Dendritic cell treated with granulocyte-macrophage colony-stimulating factor and Interleukin-4, amounts not matched to agents 40 ng/mL and 50 ng/mL, for 4 days (primary cell): ENCODE measurements at regions of chr6 and their contacts with region 1.

Region 1: DNA sequence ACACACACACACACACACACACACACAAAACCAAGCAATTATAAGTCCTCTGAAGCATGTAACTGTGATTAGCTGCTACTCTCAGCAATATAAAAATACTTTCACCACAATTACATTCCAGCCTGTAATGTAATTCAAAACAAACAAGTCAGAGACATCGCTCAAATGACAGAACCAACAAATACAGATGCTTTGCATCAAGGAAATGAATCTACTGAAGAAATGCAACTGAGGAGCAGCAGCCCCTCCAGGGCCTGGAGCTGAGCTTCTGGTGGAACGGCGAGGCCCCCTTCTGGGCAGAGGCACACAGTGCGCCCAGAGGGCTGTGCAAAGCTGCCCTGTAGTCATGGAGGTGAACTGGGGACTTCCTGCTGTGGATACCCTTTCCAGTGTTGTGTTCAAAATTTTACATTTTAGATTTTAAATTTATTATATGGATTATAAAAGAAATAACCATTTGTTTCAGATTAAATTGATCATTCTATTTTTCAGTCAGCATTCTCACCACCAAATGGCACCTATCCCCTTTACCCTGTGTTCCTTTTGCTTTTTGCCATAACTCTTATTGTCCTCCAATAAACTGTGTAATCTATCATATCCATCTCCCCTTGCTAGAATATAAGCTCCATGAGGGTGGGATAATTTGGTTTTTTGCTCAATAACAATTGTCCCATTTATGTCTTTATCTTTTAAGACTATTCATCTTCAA is 23.2 kb downstream of the ADAT2 start:
- H3K4me3 Mint-ChIP-seq: no peak overlapping the region
- H3K27ac Mint-ChIP-seq: no peak overlapping the region
- H3K4me1 Mint-ChIP-seq: no peaks in the 10 kb centered on the region
- H3K27me3 Mint-ChIP-seq: no peaks in the 10 kb centered on the region

Region 2: DNA sequence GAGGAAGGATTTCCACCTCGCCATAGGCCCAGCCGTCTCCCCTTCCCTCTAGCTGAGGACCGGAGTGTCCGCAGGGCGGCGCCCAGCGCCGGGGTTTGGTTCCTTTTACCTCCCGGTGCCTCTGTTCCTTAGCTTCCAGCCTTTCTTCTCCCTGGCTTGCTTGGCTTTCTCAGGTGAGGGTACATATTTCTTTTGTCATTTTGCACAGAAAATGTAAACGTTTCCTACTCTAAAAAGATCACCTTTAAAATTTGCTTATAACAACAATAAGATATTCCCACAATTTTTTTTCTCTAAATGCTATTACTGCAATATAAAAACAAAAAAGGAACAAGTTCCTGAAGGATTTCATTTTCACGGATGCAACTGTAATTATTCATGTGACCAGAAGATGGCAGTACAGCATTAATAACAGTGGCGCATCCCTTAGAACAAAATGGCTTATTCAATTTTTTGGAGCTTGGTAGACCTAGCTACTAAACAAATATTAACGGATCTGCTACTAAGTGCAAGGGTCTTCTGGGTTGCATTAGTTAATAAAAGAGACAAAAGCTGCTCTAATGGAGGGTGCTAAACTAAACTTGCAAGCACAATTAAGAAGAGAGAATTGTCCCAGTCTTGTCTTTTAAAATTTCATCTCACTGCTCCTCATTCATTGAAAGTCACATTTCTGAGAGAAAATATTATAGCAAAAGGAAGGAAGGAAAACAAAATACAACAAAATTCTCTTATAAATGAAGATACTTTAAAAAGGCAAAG is 952.6 kb before region 1 on chr6:
- intact Hi-C with region 1: loop called (anchors 5 kb)
- H3K4me3 Mint-ChIP-seq: no peak overlapping the region
- H3K27ac Mint-ChIP-seq: no peak overlapping the region
- H3K4me1 Mint-ChIP-seq: no peaks in the 10 kb centered on the region
- H3K27me3 Mint-ChIP-seq: no peaks in the 10 kb centered on the region

Region 3: DNA sequence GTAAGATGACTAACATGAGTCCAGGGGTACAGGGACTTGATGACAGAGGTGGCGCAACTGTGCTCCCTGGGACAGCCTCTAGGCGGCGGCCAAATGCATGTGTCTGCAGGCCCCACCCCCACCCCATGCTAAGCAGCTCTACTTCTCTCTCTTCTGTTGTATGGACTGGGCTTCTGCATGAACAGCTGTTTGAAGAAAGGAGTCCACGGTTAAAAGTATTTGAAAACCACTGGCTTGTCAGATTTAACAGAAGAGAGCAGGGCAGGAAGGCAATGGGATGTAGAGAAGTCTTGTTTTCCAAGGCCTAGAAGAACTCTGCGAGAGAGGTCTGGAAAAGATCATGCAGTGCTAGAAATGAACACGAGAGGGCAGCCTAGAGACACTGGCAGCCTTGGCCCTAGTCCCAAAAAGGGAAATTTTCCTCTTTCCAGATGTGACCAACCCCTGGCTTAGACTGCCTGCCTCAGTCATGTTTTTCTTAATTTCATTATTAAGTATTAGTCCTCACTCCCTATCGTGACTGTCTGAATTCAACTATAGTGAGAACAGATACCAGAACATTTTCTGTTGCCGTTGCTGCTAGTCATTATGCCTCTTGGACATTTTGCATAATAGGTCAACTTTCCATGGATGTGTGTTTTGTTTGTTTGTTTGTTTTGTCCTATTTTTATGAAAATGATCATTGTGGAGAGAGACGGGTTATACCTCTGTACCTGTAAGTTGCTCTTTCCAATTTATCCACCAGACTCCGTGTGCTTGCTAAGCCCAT is 860.5 kb before region 1 on chr6:
- intact Hi-C with region 1: loop called (anchors 10 kb)
- H3K4me3 Mint-ChIP-seq: no peak overlapping the region
- H3K27ac Mint-ChIP-seq: no peak overlapping the region
- H3K4me1 Mint-ChIP-seq: no peaks in the 10 kb centered on the region
- H3K27me3 Mint-ChIP-seq: no peaks in the 10 kb centered on the region

Region 4: DNA sequence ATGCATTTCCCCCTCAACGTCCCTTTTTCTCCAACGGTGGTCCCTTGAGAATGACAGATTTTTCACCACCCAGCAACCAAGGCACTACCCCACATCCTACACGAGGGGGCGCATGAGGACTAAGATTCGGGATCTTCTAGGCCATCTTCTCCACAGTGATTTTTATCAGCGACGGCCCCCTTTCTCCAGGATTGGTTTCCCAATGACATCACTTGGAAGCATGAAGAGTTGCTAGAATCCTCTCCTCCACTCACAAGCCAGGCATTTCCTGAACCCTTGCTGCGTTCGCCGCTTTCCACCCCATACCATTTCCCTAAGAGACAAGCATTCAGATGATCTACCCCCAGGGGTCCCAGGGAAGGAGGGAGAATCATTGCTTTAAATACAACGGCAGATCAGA is 734.3 kb before region 1 on chr6:
- intact Hi-C with region 1: loop called (anchors 1 kb)
- H3K4me3 Mint-ChIP-seq: no peak overlapping the region
- H3K27ac Mint-ChIP-seq: no peak overlapping the region
- H3K4me1 Mint-ChIP-seq: peaks cover 33% of the 10 kb centered on the region
- H3K27me3 Mint-ChIP-seq: peaks cover 7% of the 10 kb centered on the region

Region 5: DNA sequence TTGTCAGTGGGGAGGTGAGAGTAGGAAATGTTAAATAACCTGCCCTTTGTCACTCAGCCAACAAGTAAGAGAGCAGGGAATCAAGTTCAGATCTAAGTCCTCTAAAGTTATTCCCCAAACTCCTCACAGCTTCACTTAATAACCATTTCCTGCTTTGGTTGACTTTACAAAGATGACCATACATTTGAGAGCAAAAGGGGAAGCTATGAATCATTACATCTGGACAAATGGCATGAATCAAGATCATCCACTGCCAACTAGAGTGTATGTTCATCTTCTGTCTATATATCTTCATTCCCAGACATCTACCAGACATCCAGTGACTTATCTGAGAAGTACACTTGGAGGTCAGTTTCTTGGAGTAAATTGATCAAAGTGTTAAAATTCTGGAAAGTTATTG is 467.2 kb before region 1 on chr6:
- intact Hi-C with region 1: no loop called
- H3K4me3 Mint-ChIP-seq: no peak overlapping the region
- H3K27ac Mint-ChIP-seq: no peak overlapping the region
- H3K4me1 Mint-ChIP-seq: peaks cover 11% of the 10 kb centered on the region
- H3K27me3 Mint-ChIP-seq: peaks cover 3% of the 10 kb centered on the region

Region 6: DNA sequence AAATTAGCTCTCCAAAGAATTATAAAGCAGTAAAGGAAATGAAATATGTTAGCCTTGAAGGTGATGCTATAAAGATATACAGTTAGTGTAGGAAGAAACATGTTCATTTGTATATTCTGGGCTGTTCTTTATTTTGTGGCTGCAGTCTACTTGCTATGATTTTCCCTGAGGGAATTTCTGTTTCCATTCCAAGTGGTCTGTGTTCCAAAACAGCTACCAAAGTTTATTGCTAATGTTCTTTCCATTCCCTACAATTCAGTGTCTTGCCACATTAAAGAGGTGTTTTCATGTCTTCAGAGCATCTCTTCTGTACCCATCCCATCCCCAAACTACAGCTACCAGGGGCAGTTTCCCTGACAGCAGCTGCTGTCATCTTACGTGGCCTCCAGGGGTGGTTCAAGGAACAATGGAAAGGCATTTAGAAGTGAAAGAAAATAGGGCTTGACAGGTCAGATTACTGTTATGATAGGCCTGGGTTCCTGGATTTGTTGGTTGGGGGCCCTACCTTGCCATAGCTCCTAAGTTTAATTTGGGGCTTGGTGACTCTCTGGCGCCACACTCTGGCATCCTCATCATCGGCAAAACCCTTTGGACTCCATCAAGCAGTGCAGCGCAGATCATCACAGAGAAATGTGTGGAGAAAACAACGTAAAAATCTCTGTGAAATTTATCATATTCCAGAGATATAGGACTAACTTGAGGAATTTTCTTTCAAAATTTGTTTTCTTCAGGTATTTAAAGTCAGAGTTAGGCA is 400.4 kb before region 1 on chr6:
- intact Hi-C with region 1: loop called (anchors 2 kb)
- H3K4me3 Mint-ChIP-seq: no peak overlapping the region
- H3K27ac Mint-ChIP-seq: no peak overlapping the region
- H3K4me1 Mint-ChIP-seq: peaks cover 4% of the 10 kb centered on the region
- H3K27me3 Mint-ChIP-seq: no peaks in the 10 kb centered on the region

Region 7: DNA sequence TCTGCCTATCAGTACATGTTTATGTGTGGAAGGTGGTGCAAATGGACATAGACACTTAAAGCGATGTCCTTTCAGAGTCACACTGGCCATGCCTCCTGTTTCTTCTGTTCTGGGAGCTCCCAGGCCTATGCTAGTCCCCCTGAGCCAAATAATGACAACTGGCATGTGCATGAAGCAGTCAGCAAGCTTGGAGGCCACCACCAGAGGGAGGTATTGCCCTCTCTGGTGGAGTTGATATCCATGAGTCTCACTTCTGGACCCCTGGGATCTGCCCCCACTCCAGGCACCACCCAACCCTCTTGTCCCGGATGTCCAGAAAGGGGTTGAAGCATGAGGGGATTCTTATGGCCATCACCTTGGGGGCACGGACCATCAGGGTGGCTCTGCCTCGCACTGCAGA is 194.4 kb before region 1 on chr6:
- intact Hi-C with region 1: loop called (anchors 1 kb)
- H3K4me3 Mint-ChIP-seq: no peak overlapping the region
- H3K27ac Mint-ChIP-seq: no peak overlapping the region
- H3K4me1 Mint-ChIP-seq: peaks cover 7% of the 10 kb centered on the region
- H3K27me3 Mint-ChIP-seq: no peaks in the 10 kb centered on the region

Region 8: GRCh38 chr6:143657809-143658208 is 230.5 kb after region 1 on chr6:
- intact Hi-C with region 1: no loop called
- H3K4me3 Mint-ChIP-seq: no peak overlapping the region
- H3K27ac Mint-ChIP-seq: no peak overlapping the region
- H3K4me1 Mint-ChIP-seq: peaks cover 9% of the 10 kb centered on the region
- H3K27me3 Mint-ChIP-seq: no peaks in the 10 kb centered on the region

Region 9: DNA sequence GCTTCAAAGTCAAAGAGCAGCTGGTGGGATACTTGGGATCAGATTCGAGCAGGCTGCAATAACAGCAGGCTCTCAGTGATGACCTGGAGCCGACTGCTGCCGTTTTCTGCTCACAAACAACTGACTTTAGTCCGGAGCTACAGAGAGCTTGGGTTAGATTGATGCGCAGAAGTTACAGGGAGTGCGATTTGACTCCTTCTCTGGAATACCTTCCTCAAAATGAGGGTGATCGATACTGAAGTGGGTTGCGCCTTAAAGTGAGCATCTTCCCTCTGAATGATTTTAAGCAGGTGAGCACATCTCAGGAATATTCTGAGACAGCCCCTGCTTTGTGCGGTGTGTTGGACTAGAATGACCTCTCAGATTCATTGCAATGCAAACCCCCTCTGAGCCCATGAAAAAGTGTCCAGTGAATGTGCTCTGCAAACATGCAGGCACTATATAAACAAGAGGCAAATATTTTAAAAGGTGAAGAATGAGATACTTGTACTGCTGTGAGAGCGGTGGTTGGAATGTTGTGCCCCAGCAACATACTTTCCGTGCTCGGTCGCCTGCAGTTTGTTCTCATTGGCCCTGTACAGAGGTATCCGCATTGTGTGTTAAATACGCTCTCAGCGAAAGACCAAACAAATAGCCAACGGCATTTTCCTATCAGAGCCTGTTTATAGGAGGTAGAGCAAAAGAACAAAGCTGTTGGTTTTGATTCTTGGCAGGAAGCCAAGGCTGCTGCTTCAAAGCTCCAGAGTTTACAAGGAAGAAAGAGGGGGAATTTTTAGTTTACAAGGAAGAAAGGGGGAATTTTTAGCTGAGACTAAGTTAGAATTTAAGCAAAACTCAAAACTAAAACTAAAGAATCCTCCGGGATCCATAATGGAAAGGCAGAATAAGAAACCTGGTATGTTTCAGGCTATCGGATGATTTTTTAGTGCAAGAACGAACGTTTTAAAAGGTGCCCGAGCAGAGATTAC is 318.2 kb after region 1 on chr6:
- intact Hi-C with region 1: no loop called
- H3K4me3 Mint-ChIP-seq: no peak overlapping the region
- H3K27ac Mint-ChIP-seq: no peak overlapping the region
- H3K4me1 Mint-ChIP-seq: peaks cover 44% of the 10 kb centered on the region
- H3K27me3 Mint-ChIP-seq: no peaks in the 10 kb centered on the region